ENCODE measurements at regions of chr14 and their contacts with region 1.

Region 1: DNA sequence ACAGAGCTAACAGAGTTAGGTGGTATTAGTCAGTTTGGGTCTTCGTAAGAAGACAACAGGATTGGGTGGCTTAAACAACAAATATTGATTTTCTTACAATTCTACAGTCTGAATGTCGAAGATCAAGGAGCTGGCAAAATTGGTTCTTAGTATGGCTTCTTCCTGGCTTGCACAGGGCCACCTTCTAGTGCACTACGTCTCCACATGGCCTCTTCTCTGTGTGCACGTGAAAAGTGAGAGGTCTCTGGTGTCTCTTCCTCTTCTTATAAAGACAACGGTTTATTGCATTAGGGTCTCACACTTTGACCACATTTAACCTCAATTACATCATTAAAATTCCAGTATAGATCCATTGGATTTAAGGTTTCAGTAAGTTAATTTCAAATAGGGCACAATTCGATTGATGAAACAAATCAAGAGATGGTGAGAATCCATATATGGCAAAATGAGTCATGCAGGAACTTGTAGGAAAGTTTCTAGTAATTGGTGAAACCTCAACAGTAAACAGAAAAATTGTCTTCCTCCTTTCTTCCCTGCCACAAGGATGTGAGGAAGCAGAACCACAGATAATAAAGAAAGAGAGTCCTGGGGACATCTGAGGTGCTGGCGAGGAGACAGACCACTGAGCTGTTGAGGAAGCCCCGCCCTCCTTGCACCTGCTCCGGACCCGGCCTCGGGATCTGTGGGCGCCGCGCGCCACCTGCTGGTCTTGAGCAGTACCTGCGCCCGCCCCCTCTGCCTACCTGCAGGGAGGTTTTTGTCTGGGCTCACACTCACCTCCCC is 846.7 kb downstream of the TMEM121 start:
- DNase-seq: peak; percentile 87
- H3K4me3 Mint-ChIP-seq: no peak overlapping the region
- H3K27ac Mint-ChIP-seq: peak overlapping the region; percentile 8
- H3K4me1 Mint-ChIP-seq: peaks cover 24% of the 10 kb centered on the region
- H3K27me3 Mint-ChIP-seq: peaks cover 26% of the 10 kb centered on the region

Region 2: DNA sequence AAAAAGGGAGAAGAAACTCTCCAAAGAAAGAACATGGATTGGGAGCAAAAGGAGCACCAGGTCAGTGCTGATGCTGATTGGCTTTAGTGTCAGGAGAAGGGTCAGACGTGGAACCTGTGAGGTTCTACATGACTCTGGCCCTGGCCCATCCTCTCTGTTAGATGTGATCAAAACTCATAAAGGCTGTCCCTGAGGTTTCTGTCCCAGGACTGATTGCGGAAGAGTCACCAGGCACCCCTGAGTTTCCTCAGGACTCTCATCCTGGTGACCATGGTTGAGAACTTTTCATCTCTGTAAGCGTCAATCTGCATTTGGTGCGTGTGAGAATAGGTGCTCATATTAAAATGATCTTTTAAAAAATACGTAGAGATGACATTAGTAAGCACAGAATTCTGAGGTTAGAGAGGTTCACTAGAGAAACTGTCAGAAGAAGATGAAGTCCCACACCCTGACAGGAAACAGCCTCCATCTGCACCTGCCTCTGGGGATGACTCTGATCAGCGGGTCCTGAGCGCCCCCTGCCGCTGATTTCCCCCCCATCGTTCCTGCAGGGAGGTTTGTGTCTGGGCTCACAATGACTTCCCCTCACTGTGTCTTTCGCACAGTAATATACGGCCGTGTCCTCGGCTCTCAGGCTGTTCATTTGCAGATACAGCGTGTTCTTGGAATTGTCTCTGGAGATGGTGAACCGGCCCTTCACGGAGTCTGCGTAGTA is 104.9 kb before region 1 on chr14:
- CTCF ChIA-PET with region 1: interaction called, 11 read pairs
- DNase-seq: peak; percentile 91
- H3K4me3 Mint-ChIP-seq: no peak overlapping the region
- H3K27ac Mint-ChIP-seq: no peak overlapping the region
- H3K4me1 Mint-ChIP-seq: peaks cover 10% of the 10 kb centered on the region
- H3K27me3 Mint-ChIP-seq: peaks cover 36% of the 10 kb centered on the region

Region 3: DNA sequence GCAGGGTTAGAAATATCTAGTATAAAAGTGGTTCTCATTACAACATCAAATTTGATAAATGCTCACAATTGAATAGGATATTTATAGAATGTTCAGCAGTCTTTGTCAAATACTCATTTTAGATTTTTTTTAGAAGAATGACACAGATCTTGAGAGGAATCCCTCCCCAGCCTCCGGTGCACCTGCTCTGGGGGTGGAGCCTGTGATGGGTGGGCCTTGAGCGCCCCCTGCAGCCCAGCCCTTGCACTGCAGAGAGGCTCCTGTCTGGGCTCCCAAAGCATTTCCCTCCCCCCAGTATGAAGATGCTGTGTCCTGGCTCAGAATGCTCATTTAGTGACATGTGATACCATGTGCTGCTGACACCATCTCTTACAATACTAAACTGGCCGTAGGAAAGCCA is 54.4 kb before region 1 on chr14:
- CTCF ChIA-PET with region 1: interaction called, 10 read pairs
- DNase-seq: peak; percentile 71
- H3K4me3 Mint-ChIP-seq: no peak overlapping the region
- H3K27ac Mint-ChIP-seq: no peak overlapping the region
- H3K4me1 Mint-ChIP-seq: no peaks in the 10 kb centered on the region
- H3K27me3 Mint-ChIP-seq: peaks cover 62% of the 10 kb centered on the region

Region 4: DNA sequence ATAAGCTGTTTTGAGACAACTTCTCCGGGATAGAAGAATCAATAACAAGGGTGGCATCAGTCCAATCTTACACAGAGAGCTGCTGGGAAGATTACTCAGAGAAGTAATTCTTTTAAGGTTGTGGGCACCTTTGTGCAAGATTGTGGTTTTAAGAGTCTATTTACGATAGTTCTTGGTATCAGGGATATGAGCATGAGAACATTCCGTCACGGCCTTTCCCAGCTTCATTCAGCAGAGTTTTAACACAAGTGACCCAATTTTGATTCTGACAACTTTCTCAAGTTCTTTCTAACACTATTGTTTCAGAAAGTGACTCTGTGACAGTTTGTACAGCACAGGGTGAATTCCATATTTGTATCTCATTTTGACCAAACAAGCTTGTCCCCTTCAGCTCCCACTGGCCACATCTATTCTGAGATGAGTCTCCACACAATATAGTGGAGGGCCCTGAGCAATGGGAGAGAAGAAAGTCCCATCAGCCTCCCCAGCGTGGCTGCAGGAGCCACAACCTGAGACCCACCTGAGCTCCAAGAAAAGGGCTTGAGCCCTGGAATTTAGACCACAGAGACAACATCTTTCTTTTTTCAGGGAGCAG is 22.5 kb after region 1 on chr14:
- CTCF ChIA-PET with region 1: interaction called, 34 read pairs
- DNase-seq: no peak
- H3K4me3 Mint-ChIP-seq: peak overlapping the region; percentile 17
- H3K27ac Mint-ChIP-seq: peak overlapping the region; percentile 75
- H3K4me1 Mint-ChIP-seq: peaks cover 33% of the 10 kb centered on the region
- H3K27me3 Mint-ChIP-seq: peaks cover 24% of the 10 kb centered on the region

Region 5: GRCh38 chr14:106622200-106622745 is 249.2 kb after region 1 on chr14:
- CTCF ChIA-PET with region 1: no interaction called
- DNase-seq: peak; percentile 49
- H3K4me3 Mint-ChIP-seq: no peak overlapping the region
- H3K27ac Mint-ChIP-seq: no peak overlapping the region
- H3K4me1 Mint-ChIP-seq: peaks cover 14% of the 10 kb centered on the region
- H3K27me3 Mint-ChIP-seq: peaks cover 66% of the 10 kb centered on the region

Measured in activated naive CD4-positive, alpha-beta T cell treated with anti-CD3 and anti-CD28 coated beads, Interleukin-2, amount 10 ng/mL, durations not matched to agents 7 days and 5 days (primary cell).